ENCODE measurements at regions of chr11 and their contacts with region 1.

Region 1: GRCh38 chr11:18395735-18396504 is 1.6 kb downstream of the LDHA start:
- DNase-seq: peak; percentile 97

Region 2: DNA sequence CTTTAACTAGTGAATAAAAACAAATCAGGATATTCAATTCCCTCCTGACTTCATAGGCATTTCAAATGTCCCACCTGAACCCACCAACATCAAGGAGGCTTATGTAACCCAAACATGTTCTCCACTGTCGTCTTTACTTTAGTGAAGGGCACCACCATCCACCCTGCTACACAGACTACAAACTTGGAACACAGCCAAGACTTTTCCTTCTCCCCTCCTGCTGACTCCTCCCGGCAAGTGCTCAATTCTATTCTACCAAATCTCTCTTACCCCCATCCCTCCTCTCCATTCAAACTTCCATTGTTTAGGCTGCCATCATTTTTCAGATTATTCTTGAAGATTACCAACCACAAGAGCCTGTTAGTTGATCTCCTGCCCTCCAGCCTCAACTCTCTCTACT is 314.4 kb before region 1 on chr11:
- CTCF ChIA-PET with region 1: no interaction called
- POLR2A ChIA-PET with region 1: no interaction called
- DNase-seq: no peak

Region 3: DNA sequence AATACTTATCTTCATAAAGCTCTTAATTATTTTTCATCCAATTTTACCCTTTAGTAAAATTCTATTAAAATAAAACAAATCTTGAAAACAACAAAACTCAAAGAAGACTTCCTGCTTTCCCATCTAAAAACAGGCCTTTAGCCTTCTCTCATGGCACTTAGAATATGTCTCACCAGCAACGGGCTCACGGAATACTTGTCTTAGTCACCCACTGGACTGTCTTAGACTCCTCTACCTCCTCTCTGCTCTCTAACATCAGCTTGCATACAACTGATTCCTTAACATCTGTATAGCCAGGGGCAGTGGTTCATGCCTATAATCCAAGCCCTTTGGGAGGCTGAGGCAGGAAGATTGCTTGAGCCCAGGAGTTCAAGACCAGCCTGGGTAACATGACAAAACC is 87.7 kb before region 1 on chr11:
- CTCF ChIA-PET with region 1: no interaction called
- POLR2A ChIA-PET with region 1: no interaction called
- DNase-seq: no peak

Region 4: GRCh38 chr11:18321980-18322711 is 73.8 kb before region 1 on chr11 and contains the starts of genes GTF2H1 and HPS5:
- CTCF ChIA-PET with region 1: no interaction called
- POLR2A ChIA-PET with region 1: interaction called, 37 read pairs
- DNase-seq: peak; percentile 99

Region 5: DNA sequence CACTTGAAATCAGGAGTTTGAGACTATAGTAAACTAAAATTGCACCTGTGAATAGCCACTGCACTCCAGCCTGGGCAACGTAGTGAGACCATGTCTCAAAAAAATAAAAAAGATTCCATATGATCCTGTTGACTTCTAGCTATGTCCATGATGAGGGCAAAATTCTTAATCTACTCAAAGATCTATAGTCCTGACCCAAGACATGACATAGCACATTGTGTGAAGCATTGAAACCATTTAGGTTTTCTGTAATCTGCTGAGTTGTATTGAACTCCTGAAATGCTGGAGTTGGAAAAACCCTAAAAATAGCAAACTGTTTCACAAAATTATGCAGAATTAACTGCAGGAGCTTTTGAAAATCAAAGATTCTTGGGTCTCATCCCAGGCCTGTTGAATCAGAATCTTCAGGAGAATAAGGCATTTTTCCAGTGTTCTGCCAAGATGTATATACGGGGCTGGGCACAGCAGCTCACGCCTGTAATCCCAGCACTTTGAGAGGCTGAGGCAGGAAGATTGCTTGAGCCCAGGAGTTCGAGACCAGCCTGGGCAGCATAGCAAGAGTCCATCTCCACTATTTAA is 31.3 kb before region 1 on chr11:
- CTCF ChIA-PET with region 1: no interaction called
- POLR2A ChIA-PET with region 1: interaction called, 16 read pairs
- DNase-seq: no peak

Region 6: DNA sequence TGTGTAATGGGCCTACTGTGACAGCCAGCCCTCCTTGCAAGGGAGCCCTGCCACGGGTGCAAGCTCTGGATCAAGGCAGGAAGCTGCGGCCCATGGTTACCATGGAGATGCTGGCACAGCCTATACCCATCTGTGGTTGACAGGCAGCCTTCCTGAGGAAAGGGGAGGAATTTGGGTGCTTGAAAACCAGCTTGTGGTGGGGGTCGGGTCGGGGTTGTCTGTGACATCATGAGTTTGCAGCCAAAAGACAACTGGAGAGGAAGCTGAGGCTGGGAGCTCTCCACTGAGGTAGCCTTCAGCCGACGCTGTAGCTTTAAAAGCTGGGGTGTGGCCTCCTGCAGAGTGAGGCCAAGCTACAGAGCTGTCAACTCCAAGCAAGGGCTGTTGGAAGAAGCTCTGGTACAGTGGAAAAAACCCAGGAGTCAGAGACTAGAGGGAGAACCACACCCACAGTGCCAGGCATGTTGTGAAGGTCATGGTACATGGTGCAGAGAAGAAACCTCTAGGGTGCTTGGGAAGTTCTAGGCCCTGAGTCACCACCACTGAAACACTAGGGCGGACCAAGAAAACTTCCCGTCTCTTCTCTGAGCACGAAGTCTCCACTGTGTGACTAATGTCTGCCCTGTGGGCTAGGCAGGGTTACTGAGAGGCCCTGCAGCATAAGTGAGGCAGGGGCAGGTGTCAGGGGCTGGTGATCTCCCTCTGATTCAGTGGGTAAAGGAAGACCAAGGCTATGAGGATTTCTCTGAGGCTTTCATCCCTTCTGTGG is 12.3 kb before region 1 on chr11:
- CTCF ChIA-PET with region 1: no interaction called
- POLR2A ChIA-PET with region 1: interaction called, 83 read pairs
- DNase-seq: peak; percentile 16

Region 7: GRCh38 chr11:18526521-18527296 is 130.8 kb after region 1 on chr11 and contains the start of gene TSG101:
- CTCF ChIA-PET with region 1: no interaction called
- POLR2A ChIA-PET with region 1: interaction called, 22 read pairs
- DNase-seq: peak; percentile 93

Region 8: GRCh38 chr11:18540207-18541009 is 144.5 kb after region 1 on chr11:
- CTCF ChIA-PET with region 1: no interaction called
- POLR2A ChIA-PET with region 1: no interaction called
- DNase-seq: no peak